Activated B cell treated with CpG ODN at 0.5 μM for 24 hours (primary cell): ENCODE measurements at regions of chr5 and their contacts with region 1.

Region 1: GRCh38 chr5:43547532-43547931 is 9.3 kb downstream of the PAIP1 start:
- DNase-seq: no peak
- ATAC-seq: no peak
- H3K4me3 Mint-ChIP-seq: no peak overlapping the region
- H3K27ac Mint-ChIP-seq: no peak overlapping the region
- H3K4me1 Mint-ChIP-seq: peaks cover 12% of the 10 kb centered on the region
- H3K27me3 Mint-ChIP-seq: no peaks in the 10 kb centered on the region
- CTCF ChIP-seq: no peak

Region 2: DNA sequence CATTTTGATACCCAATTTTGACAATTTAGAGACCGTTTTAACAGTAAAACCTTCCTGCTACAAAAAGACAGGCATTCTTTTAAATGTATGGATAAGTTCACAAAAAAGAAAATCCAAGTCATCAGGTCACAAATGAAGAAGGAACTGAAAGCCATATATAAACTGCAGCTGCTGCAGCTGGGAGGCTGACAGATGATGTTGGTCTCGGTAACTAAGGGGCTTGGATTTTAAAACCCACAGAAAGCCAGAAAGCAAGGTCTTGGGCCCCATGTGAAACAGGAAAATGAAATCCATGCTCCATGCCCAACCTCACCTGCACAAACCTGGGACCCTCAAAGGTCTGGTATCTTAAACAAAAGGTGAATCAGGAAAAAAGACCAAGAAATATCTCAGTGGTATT is 16.9 kb before region 1 on chr5:
- CTCF ChIA-PET with region 1: no interaction called
- POLR2A ChIA-PET with region 1: interaction called, 8 read pairs
- intact Hi-C with region 1: loop called (anchors 2 kb)
- DNase-seq: no peak
- ATAC-seq: no peak
- H3K4me3 Mint-ChIP-seq: no peak overlapping the region
- H3K27ac Mint-ChIP-seq: no peak overlapping the region
- H3K4me1 Mint-ChIP-seq: no peaks in the 10 kb centered on the region
- H3K27me3 Mint-ChIP-seq: no peaks in the 10 kb centered on the region
- CTCF ChIP-seq: no peak